SK-N-SH (cell line): ENCODE measurements at regions of chr3 and their contacts with region 1.

Region 1: GRCh38 chr3:8301728-8302462 is 199.7 kb upstream of the LMCD1 start:
- DNase-seq: peak; percentile 35
- H3K4me3 ChIP-seq: no peak overlapping the region; a peak in 1 of 4 replicates
- H3K27ac ChIP-seq: no peak overlapping the region
- H3K4me1 ChIP-seq: peaks cover 4 to 7% of the 10 kb centered on the region in 2 experiments; a peak in 2 of 4 replicates
- H3K27me3 ChIP-seq: no peaks in the 10 kb centered on the region
- CTCF ChIP-seq: peak; percentile 74
- EP300 ChIP-seq: no peak
- RAD21 ChIP-seq: peak; percentile 79

Region 2: GRCh38 chr3:8286086-8286485 is 15.8 kb before region 1 on chr3:
- CTCF ChIA-PET with region 1: interaction called, 58 read pairs
- POLR2A ChIA-PET with region 1: no interaction called
- DNase-seq: no peak
- H3K4me3 ChIP-seq: no peak overlapping the region
- H3K27ac ChIP-seq: no peak overlapping the region
- H3K4me1 ChIP-seq: no peaks in the 10 kb centered on the region; a peak in 1 of 4 replicates
- H3K27me3 ChIP-seq: no peaks in the 10 kb centered on the region
- CTCF ChIP-seq: no peak
- EP300 ChIP-seq: no peak
- RAD21 ChIP-seq: no peak

Region 3: DNA sequence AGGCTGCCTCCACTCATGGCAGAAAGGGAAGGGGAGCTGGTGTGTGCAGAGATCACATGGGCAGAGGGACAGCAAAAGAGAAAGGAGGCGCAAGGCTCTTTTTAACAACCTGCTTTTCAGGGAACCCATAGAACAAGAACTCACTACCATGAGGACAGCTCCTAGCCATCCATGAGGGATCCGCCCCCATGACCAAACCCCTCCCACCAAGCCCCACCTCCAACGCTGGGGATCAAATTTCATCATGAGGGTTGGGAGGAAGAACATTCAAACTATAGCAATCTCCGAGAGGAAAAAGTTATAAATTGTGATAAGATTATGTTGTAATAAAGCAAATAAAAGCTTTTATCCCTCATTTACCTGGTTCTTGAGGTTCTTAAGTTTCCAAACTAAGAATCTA is 115.1 kb after region 1 on chr3:
- CTCF ChIA-PET with region 1: interaction called, 20 read pairs
- POLR2A ChIA-PET with region 1: no interaction called
- DNase-seq: no peak
- H3K4me3 ChIP-seq: 0 out of 4 replicates have a peak overlapping the region, but pooled peaks of 1 of the 2 experiments have one; percentile 30
- H3K27ac ChIP-seq: no peak overlapping the region
- H3K4me1 ChIP-seq: peaks cover 0 to 18% of the 10 kb centered on the region in 2 experiments; a peak in 2 of 4 replicates
- H3K27me3 ChIP-seq: no peaks in the 10 kb centered on the region
- CTCF ChIP-seq: no peak
- EP300 ChIP-seq: no peak
- RAD21 ChIP-seq: no peak